Transverse colon (tissue), 4 donors: ENCODE measurements at regions of chr9 and their contacts with region 1.

Region 1: GRCh38 chr9:68704814-68705530 is at the start of gene PIP5K1B:
- DNase-seq: peak; percentile 90
- H3K4me3 ChIP-seq: peak within 1 kb of the TSS; percentile 39 to 88 (median 68)
- H3K27ac ChIP-seq: peak within 1 kb of the TSS; percentile 94 to 95 (median 94)
- H3K4me1 ChIP-seq: peaks cover 0 to 30% (median 19%) of the 10 kb centered on the region in 4 donors
- H3K27me3 ChIP-seq: peaks cover 3% of the 10 kb centered on the region
- CTCF ChIP-seq: peak in 1 of 5 experiments; percentile 11
- EP300 ChIP-seq: no peak
- POLR2A ChIP-seq: peak; percentile 91
- total RNA-seq, gene PIP5K1B: 45.6 to 104 (median 76.0) TPM

Region 2: GRCh38 chr9:68530618-68531017 is 174.4 kb before region 1 on chr9:
- in situ Hi-C with region 1: no loop called
- intact Hi-C with region 1: loop called (anchors 5 kb)
- DNase-seq: peak; percentile 85
- H3K4me3 ChIP-seq: no peak overlapping the region
- H3K27ac ChIP-seq: peak overlapping the region; percentile 55 to 80 (median 71)
- H3K4me1 ChIP-seq: peaks cover 0 to 22% (median 8%) of the 10 kb centered on the region in 4 donors
- H3K27me3 ChIP-seq: no peaks in the 10 kb centered on the region
- CTCF ChIP-seq: peak in 2 of 5 experiments; percentile 13 to 25
- EP300 ChIP-seq: peak; percentile 80
- POLR2A ChIP-seq: peak; percentile 23

Region 3: GRCh38 chr9:68739621-68740174 is 34.7 kb after region 1 on chr9:
- in situ Hi-C with region 1: no loop called
- intact Hi-C with region 1: no loop called
- DNase-seq: peak; percentile 66
- H3K4me3 ChIP-seq: peak overlapping the region in 2 of 4 donors; percentile 13 to 33
- H3K27ac ChIP-seq: peak overlapping the region; percentile 79 to 91 (median 85)
- H3K4me1 ChIP-seq: peaks cover 14 to 70% (median 34%) of the 10 kb centered on the region in 4 donors
- H3K27me3 ChIP-seq: no peaks in the 10 kb centered on the region
- CTCF ChIP-seq: no peak
- EP300 ChIP-seq: no peak
- POLR2A ChIP-seq: peak; percentile 54

Region 4: GRCh38 chr9:68844631-68845612 is 139.9 kb after region 1 on chr9:
- in situ Hi-C with region 1: loop called in 1 of 4 experiments (anchors 25 kb)
- intact Hi-C with region 1: no loop called
- DNase-seq: peak; percentile 51
- H3K4me3 ChIP-seq: no peak overlapping the region
- H3K27ac ChIP-seq: peak overlapping the region in 3 of 4 donors; percentile 3 to 6 (median 4)
- H3K4me1 ChIP-seq: no peaks in the 10 kb centered on the region
- H3K27me3 ChIP-seq: no peaks in the 10 kb centered on the region
- CTCF ChIP-seq: peak; percentile 30 to 43 (median 37)
- EP300 ChIP-seq: no peak
- POLR2A ChIP-seq: no peak

Region 5: GRCh38 chr9:69121828-69122548 is 417.0 kb after region 1 on chr9:
- in situ Hi-C with region 1: no loop called
- intact Hi-C with region 1: no loop called
- DNase-seq: peak; percentile 68
- H3K4me3 ChIP-seq: peak overlapping the region; percentile 44 to 89 (median 79)
- H3K27ac ChIP-seq: peak overlapping the region; percentile 86 to 94 (median 93)
- H3K4me1 ChIP-seq: peaks cover 0 to 19% (median 8%) of the 10 kb centered on the region in 4 donors
- H3K27me3 ChIP-seq: no peaks in the 10 kb centered on the region
- CTCF ChIP-seq: no peak
- EP300 ChIP-seq: no peak
- POLR2A ChIP-seq: no peak